CD8-positive, alpha-beta T cell (primary cell): ENCODE measurements at regions of chr9 and their contacts with region 1.

Region 1: GRCh38 chr9:128361986-128362646 is 9.1 kb upstream of the URM1 start:
- DNase-seq: peak; percentile 26 to 79 (median 67)
- ATAC-seq: peak; percentile 91
- H3K4me3 ChIP-seq: peak overlapping the region; percentile 47 to 65
- H3K4me3 Mint-ChIP-seq: peak overlapping the region; percentile 83
- H3K27ac ChIP-seq: peak overlapping the region in 1 of 2 experiments; percentile 23
- H3K27ac Mint-ChIP-seq: no peak overlapping the region
- H3K4me1 ChIP-seq: peaks cover 16% of the 10 kb centered on the region
- H3K4me1 Mint-ChIP-seq: peaks cover 10% of the 10 kb centered on the region
- H3K27me3 ChIP-seq: peaks cover 0 to 2% of the 10 kb centered on the region in 2 experiments
- H3K27me3 Mint-ChIP-seq: no peaks in the 10 kb centered on the region
- CTCF ChIP-seq: peak; percentile 88

Region 2: GRCh38 chr9:128296337-128297220 is 65.5 kb before region 1 on chr9:
- CTCF ChIA-PET with region 1: interaction called, 10 read pairs
- POLR2A ChIA-PET with region 1: no interaction called
- intact Hi-C with region 1: loop called in 1 of 2 experiments (anchors 1 kb)
- DNase-seq: no peak
- ATAC-seq: no peak
- H3K4me3 ChIP-seq: no peak overlapping the region
- H3K4me3 Mint-ChIP-seq: no peak overlapping the region
- H3K27ac ChIP-seq: no peak overlapping the region
- H3K27ac Mint-ChIP-seq: no peak overlapping the region
- H3K4me1 ChIP-seq: no peaks in the 10 kb centered on the region
- H3K4me1 Mint-ChIP-seq: peaks cover 3% of the 10 kb centered on the region
- H3K27me3 ChIP-seq: no peaks in the 10 kb centered on the region
- H3K27me3 Mint-ChIP-seq: no peaks in the 10 kb centered on the region
- CTCF ChIP-seq: no peak

Region 3: GRCh38 chr9:128344931-128345605 is 17.0 kb before region 1 on chr9:
- CTCF ChIA-PET with region 1: interaction called, 16 read pairs
- POLR2A ChIA-PET with region 1: no interaction called
- intact Hi-C with region 1: loop called (anchors 1 to 2 kb)
- DNase-seq: no peak
- ATAC-seq: no peak
- H3K4me3 ChIP-seq: no peak overlapping the region
- H3K4me3 Mint-ChIP-seq: no peak overlapping the region
- H3K27ac ChIP-seq: no peak overlapping the region
- H3K27ac Mint-ChIP-seq: no peak overlapping the region
- H3K4me1 ChIP-seq: peaks cover 8% of the 10 kb centered on the region
- H3K4me1 Mint-ChIP-seq: peaks cover 5% of the 10 kb centered on the region
- H3K27me3 ChIP-seq: no peaks in the 10 kb centered on the region
- H3K27me3 Mint-ChIP-seq: no peaks in the 10 kb centered on the region
- CTCF ChIP-seq: no peak

Region 4: DNA sequence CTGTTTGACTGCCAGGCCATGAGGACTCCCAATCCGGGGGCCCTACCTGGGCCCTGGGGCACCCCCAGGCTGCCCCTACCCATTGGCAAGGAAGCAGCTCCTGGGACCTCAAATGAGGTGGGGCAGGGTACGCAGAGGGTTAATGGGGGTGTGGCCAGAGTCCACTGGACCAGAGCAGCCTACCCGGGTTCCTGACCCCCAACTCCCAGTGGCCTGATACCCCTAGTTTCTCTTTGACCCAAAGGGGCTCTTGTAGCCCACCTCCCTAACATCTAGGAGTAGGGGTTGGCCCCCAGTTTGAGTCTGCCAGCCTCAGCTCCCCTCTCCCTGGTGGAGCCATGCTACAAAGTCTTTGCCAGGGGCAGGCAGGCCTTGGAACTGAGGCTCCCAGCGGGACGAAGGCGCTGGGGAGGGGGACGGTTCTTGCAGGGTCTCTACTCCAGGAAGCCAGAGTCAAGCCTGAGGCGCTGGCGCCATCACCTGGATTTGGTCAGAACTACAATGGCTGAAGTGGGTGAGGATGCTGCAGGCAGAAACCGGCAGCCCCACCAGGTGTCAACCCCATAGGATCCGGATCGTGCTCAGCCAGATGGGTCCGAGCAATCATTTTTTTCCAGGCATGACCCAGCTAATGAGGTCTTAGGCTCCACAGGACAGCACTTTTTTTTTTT is 50.1 kb after region 1 on chr9:
- CTCF ChIA-PET with region 1: interaction called, 16 read pairs
- POLR2A ChIA-PET with region 1: no interaction called
- intact Hi-C with region 1: loop called in 1 of 2 experiments (anchors 1 kb)
- DNase-seq: peak in 7 of 9 experiments; percentile 39 to 58 (median 49)
- ATAC-seq: peak; percentile 81
- H3K4me3 ChIP-seq: no peak overlapping the region
- H3K4me3 Mint-ChIP-seq: no peak overlapping the region
- H3K27ac ChIP-seq: no peak overlapping the region
- H3K27ac Mint-ChIP-seq: no peak overlapping the region
- H3K4me1 ChIP-seq: no peaks in the 10 kb centered on the region
- H3K4me1 Mint-ChIP-seq: no peaks in the 10 kb centered on the region
- H3K27me3 ChIP-seq: peaks cover 0 to 12% of the 10 kb centered on the region in 2 experiments
- H3K27me3 Mint-ChIP-seq: peaks cover 57% of the 10 kb centered on the region
- CTCF ChIP-seq: peak; percentile 46

Region 5: DNA sequence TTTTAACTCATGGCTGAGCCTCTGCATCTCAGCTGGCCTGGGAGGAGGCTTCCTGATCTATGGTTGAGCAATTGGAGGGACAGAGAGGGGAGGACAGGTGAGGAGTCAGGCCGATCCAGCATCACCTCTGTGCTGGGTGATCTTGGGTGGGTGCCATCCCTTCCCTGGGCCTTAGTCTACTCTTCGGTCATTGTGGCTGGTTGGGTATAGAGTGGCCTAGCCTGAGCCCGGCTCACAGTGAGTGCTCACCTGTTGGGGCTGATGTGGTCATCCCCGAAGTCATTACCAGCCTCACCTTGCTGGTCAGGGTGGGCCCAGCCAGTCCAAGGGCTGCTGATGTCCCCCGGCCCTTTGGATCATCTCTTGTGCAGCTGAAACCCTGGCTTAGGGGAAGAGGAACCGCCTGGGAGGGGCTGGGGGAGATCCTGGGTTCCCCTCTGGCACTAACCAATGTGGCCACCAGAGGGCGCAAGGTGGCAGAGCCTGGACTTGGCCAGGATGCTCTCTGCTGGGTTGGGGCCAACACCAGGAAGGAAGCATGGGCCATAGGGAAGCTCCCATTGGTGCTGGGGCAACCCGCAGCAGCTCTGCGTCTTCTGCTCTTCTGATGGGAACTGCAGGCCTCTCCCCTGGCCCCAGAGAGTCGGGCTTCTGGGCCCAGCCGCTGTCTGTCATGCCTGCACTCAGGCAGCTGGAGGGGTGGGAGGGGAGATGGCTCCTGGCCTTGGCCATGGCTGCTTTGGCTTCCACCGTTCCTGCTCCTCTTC is 76.4 kb after region 1 on chr9:
- CTCF ChIA-PET with region 1: interaction called, 14 read pairs
- POLR2A ChIA-PET with region 1: no interaction called
- intact Hi-C with region 1: loop called in 1 of 2 experiments (anchors 2 kb)
- DNase-seq: peak; percentile 63 to 89 (median 79)
- ATAC-seq: peak; percentile 97
- H3K4me3 ChIP-seq: no peak overlapping the region
- H3K4me3 Mint-ChIP-seq: no peak overlapping the region
- H3K27ac ChIP-seq: no peak overlapping the region
- H3K27ac Mint-ChIP-seq: no peak overlapping the region
- H3K4me1 ChIP-seq: peaks cover 9% of the 10 kb centered on the region
- H3K4me1 Mint-ChIP-seq: peaks cover 3% of the 10 kb centered on the region
- H3K27me3 ChIP-seq: no peaks in the 10 kb centered on the region
- H3K27me3 Mint-ChIP-seq: no peaks in the 10 kb centered on the region
- CTCF ChIP-seq: peak; percentile 66